Activated T-helper 2 cell treated with anti-CD3 and anti-CD28 coated beads, Interferon-gamma antibody, Interleukin-2, Interleukin-4, amounts not matched to agents 10 μg/mL and 5 μg/mL and 100 μg/mL, durations not matched to agents 14 hours and 24 hours and 36 hours (primary cell): ENCODE measurements at regions of chr12 and their contacts with region 1.

Region 1: DNA sequence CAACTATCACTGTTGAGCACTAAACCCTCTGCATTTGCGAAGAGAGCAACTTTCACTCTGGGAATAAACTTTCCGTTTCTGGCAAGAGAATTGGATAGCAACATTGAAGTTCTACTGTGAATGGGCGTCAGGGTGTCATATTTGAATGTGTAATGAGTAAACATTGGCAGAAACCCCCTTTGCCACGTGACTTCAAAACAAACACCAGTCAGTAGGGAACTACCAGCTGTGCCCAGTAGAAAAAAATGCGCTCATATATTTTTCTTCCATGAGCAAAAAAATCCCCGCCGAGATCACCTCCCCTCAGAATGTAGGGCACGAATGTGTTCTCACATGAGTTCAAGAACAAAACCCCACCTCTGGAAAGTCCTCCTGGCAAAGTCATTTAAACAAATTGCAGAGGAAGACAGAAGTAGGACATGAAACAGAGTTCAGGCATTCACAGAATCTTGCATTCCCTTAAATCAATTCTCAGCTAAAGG is 80.6 kb downstream of the BTG1 start:
- DNase-seq: no peak
- H3K4me3 Mint-ChIP-seq: no peak overlapping the region
- H3K27ac Mint-ChIP-seq: peak overlapping the region; percentile 54
- H3K4me1 Mint-ChIP-seq: peaks cover 45% of the 10 kb centered on the region
- H3K27me3 Mint-ChIP-seq: no peaks in the 10 kb centered on the region

Region 2: GRCh38 chr12:92049403-92049802 is 15.7 kb before region 1 on chr12:
- intact Hi-C with region 1: loop called (anchors 2 kb)
- DNase-seq: no peak
- H3K4me3 Mint-ChIP-seq: no peak overlapping the region
- H3K27ac Mint-ChIP-seq: no peak overlapping the region
- H3K4me1 Mint-ChIP-seq: peaks cover 71% of the 10 kb centered on the region
- H3K27me3 Mint-ChIP-seq: no peaks in the 10 kb centered on the region